ENCODE measurements at regions of chr2 and their contacts with region 1.

Region 1: DNA sequence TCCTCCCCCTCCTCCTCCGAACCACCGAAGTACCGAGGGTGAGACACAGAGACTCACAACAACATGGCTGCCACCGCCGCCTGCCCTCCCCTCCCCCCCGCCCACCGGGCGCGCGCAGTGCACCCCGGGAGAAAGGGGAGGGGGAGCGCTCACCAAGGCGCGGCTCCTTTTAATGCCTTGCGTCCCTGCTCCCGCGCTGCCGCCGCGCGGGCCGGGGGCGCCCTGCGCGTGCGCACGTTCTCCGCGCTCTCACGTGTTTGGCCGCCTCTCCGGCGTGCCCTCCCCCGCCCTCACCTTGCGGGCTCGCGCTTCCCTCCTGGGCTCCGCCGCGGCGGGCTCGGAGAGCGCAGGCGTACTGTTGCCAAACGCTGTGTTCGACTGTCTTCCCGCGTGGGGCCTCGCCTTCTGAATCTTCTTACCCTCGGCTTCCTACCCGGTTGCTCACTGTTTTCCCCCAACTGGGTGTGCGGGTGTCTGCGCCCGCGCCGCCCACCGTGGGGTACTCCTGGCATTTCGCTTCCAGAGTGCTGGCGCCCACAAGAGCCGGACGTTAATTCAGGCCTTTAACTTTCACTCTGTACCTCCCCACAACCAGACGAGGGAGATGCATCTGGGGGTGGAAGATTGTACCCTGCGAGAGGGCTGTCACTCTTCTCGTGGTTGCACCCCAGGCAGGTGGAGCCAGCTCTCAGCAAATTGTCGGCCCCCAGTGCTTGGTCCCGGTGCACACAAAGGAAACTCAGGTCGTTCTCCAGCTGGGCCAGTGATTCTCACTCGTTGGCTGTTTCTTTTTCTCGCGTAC is at the start of gene PUM2:
- DNase-seq: peak; percentile 96
- ATAC-seq: peak; percentile 83
- H3K4me3 Mint-ChIP-seq: peak within 1 kb of the TSS; percentile 92
- H3K27ac Mint-ChIP-seq: peak within 1 kb of the TSS; percentile 86
- H3K4me1 Mint-ChIP-seq: peaks cover 38% of the 10 kb centered on the region
- H3K27me3 Mint-ChIP-seq: no peaks in the 10 kb centered on the region
- CTCF ChIP-seq: no peak
- total RNA-seq, gene PUM2: 94.9 and 110 TPM in 2 replicates

Region 2: GRCh38 chr2:18560031-18560796 is 1790.7 kb before region 1 on chr2 and contains the start of gene RDH14:
- CTCF ChIA-PET with region 1: no interaction called
- POLR2A ChIA-PET with region 1: no interaction called
- intact Hi-C with region 1: loop called (anchors 5 kb)
- DNase-seq: peak; percentile 91
- ATAC-seq: peak; percentile 92
- H3K4me3 Mint-ChIP-seq: peak within 1 kb of the TSS; percentile 92
- H3K27ac Mint-ChIP-seq: peak within 1 kb of the TSS; percentile 91
- H3K4me1 Mint-ChIP-seq: peaks cover 32% of the 10 kb centered on the region
- H3K27me3 Mint-ChIP-seq: no peaks in the 10 kb centered on the region
- CTCF ChIP-seq: no peak
- total RNA-seq, gene RDH14: 18.7 and 19.6 TPM in 2 replicates

Region 3: DNA sequence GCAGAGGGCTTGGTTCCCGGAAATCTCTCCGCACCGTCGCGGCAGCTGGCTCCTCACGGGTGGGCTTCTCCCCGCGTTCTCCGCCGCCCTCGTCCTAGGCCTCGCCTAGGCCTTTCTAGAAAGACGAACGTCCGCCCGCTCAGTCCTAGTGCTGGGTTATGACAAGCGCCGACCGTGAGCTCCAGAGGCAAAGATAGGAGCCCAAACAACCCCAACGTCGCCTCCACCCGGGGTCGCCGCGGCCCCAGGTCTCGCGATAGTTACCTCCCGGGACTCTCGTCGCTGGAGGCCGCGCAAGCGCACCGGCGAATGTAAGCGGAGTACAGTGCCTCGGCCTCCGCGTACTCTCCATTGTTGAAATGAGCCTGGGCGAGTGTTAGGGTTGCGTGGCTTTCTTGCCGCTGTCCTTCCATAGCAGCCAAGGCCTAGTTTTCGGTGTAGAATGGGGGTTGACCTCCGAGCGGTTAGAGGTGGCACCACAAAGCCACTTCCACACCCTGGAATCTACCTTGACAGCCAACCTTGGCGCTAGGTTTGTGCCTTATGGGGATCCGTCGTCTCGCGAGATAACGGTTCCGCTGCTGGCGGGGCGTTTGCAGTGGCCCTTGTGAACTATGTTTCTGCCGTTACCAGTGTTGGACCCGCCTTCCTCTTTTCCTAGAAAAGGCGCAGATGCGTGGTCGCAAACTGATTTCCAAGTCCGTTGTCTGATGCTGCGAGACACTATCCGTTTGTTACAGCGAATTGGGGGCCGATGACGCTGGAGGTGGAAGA is 449.3 kb before region 1 on chr2 and contains the start of gene TTC32:
- CTCF ChIA-PET with region 1: no interaction called
- POLR2A ChIA-PET with region 1: no interaction called
- intact Hi-C with region 1: loop called (anchors 1 kb)
- DNase-seq: peak; percentile 91
- ATAC-seq: peak; percentile 91
- H3K4me3 Mint-ChIP-seq: peak within 1 kb of the TSS; percentile 99
- H3K27ac Mint-ChIP-seq: peak within 1 kb of the TSS; percentile 99
- H3K4me1 Mint-ChIP-seq: peaks cover 44% of the 10 kb centered on the region
- H3K27me3 Mint-ChIP-seq: peaks cover 7% of the 10 kb centered on the region
- CTCF ChIP-seq: no peak
- total RNA-seq, gene TTC32: 18.4 and 22.8 TPM in 2 replicates

Region 4: DNA sequence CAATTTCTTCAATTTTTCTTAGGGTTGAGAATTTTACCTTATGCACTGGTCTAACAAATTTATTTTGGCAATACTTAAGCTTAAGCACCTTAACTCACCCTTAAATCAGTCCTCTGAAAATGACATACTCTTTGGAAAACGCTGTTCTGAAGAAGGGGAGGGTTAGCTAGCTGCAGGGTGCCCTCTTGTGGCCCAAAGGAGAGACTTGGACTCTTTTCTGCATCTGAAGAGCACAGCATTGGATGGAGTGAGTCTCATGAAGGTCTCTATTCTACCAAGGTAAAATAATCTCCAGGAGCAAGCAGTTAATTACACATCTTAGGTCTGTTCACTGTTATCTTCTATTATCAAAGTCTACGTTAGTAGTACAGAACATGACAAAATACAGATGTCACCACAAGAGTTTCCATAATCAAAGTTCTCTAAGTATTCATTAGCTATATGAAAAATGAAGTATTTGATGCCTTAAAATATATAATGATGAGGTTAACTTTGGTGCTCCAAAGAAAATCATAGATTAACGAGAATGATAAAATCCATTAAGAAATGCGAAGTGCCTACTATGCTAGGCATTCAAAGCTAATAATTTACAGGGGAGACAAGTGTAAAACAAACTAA is 24.7 kb before region 1 on chr2:
- CTCF ChIA-PET with region 1: interaction called, 8 read pairs
- POLR2A ChIA-PET with region 1: interaction called, 3 read pairs
- intact Hi-C with region 1: loop called (anchors 1 kb)
- DNase-seq: no peak
- ATAC-seq: peak; percentile 66
- H3K4me3 Mint-ChIP-seq: no peak overlapping the region
- H3K27ac Mint-ChIP-seq: peak overlapping the region; percentile 19
- H3K4me1 Mint-ChIP-seq: peaks cover 63% of the 10 kb centered on the region
- H3K27me3 Mint-ChIP-seq: no peaks in the 10 kb centered on the region
- CTCF ChIP-seq: peak; percentile 25

Region 5: DNA sequence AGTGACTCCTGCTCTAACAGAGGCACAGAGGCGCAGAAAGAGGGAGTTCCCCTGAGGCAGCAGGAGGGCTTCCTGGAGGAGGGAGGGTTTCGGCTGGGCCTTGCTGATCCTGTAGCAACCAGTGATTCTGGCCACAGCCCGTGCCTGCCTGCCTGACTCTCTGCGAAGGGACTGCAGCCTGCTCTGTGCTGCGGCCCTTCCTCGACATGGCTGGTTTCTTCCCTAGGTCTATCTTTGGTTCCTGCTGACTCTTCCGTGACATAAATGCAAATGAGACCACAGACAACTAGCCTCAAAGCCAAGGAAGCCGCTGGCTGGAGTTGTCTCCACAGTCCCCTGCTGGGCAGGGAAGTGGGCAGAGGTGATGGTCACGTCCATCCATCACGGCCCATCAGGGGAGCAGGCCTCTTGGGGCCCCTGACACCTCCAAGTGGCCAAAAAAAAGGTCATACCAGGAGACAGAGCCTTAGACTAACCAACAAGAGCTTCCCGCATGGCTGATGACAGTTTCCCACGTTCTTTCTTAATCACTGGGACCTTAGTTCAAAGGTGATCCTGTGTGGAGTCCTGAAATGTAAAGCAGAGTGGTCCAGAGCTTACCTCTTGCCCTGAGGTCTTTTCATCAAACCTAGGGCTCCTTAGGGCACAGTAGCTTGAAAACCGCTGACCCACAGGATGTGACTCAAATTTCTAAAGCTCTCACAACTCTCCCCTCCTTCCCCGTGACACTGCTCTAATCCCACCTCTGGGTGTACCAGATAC is 244.7 kb after region 1 on chr2:
- CTCF ChIA-PET with region 1: no interaction called
- POLR2A ChIA-PET with region 1: no interaction called
- intact Hi-C with region 1: loop called (anchors 5 kb)
- DNase-seq: peak; percentile 45
- ATAC-seq: peak; percentile 83
- H3K4me3 Mint-ChIP-seq: peak overlapping the region; percentile 72
- H3K27ac Mint-ChIP-seq: peak overlapping the region; percentile 82
- H3K4me1 Mint-ChIP-seq: peaks cover 38% of the 10 kb centered on the region
- H3K27me3 Mint-ChIP-seq: peaks cover 21% of the 10 kb centered on the region
- CTCF ChIP-seq: no peak

Region 6: DNA sequence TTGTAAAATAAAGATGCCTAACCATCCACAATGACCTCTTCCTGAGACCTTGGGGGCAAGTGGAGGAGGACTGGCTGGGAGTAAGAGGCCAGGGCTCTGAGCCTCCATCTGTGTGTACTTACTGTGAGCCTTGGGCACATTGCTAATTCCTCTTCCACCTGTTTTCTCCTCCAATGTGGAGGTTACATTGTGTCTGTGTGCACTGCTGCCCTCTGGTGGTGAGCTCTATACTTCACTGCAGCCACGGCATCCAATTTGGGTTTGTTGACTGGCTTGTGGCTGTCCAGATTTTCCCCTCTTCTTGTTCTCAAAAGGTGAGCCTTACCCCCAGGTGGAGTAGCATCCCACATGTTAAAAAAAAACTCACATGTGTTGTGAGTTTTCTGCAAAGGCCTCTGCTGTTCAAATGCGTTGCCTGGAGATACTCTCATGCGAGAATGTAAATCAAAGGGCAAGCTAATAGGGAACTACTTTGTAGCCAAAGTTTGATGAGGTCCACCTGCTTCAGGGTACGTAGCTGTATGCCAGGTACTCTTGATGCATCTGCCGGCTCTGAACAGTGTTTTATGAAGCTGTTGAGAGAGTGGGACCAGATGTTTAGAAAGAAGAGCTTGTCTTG is 612.1 kb after region 1 on chr2:
- CTCF ChIA-PET with region 1: no interaction called
- POLR2A ChIA-PET with region 1: no interaction called
- intact Hi-C with region 1: no loop called
- DNase-seq: peak; percentile 49
- ATAC-seq: peak; percentile 73
- H3K4me3 Mint-ChIP-seq: no peak overlapping the region
- H3K27ac Mint-ChIP-seq: no peak overlapping the region
- H3K4me1 Mint-ChIP-seq: no peaks in the 10 kb centered on the region
- H3K27me3 Mint-ChIP-seq: peaks cover 19% of the 10 kb centered on the region
- CTCF ChIP-seq: peak; percentile 82

Region 7: GRCh38 chr2:21772624-21773023 is 1421.7 kb after region 1 on chr2:
- CTCF ChIA-PET with region 1: no interaction called
- POLR2A ChIA-PET with region 1: no interaction called
- intact Hi-C with region 1: no loop called
- DNase-seq: no peak
- ATAC-seq: no peak
- H3K4me3 Mint-ChIP-seq: no peak overlapping the region
- H3K27ac Mint-ChIP-seq: no peak overlapping the region
- H3K4me1 Mint-ChIP-seq: no peaks in the 10 kb centered on the region
- H3K27me3 Mint-ChIP-seq: no peaks in the 10 kb centered on the region
- CTCF ChIP-seq: no peak

Measured in activated B cell treated with CpG ODN at 0.5 μM for 24 hours (primary cell).